Gastrocnemius medialis (tissue), 4 donors: ENCODE measurements at regions of chr12 and their contacts with region 1.

Region 1: DNA sequence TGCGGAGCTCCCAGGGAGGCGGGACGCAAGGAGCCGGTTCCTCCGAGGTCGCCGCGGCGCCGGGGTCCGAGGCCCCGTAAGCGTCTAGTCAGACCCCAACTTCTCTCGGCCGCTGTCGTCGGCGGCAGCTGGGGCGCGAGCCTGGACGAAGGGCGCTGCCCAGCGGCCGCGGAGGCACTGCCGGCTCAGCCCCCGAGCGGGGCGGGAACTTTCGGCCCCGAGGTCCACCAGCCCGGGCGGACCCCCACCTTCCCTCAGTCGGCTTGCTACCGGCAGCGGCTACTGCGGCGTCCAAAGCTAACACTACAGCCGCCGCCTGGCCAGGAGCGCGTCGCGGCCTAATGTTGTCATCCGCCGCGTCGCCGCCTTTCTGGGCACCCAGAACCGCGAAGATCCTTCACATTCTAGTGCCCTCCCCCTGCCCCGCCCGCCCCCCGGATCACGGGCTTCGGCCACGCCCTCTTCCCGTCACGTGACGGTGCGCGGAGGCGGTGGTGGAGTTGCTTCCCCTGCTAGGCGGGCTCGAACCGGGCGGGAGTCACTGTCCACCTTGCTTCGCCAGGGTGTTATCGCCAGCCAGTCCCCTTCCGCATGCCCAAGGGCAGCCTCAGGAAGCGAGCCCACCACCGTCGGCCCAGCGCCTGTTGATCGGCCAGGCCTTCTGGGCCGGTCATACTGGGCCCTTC is at the start of gene OSBPL8:
- DNase-seq: peak; percentile 90 to 95
- ATAC-seq: peak; percentile 90 to 94
- H3K4me3 ChIP-seq: peak within 1 kb of the TSS; percentile 90 to 100 (median 98)
- H3K27ac ChIP-seq: peak within 1 kb of the TSS; percentile 93 to 99 (median 95)
- H3K4me1 ChIP-seq: peaks cover 12 to 35% of the 10 kb centered on the region in 2 donors
- H3K27me3 ChIP-seq: no peaks in the 10 kb centered on the region
- CTCF ChIP-seq: peak; percentile 23 to 48 (median 37)
- POLR2A ChIP-seq: peak; percentile 85 to 94
- total RNA-seq, gene OSBPL8: 25.6 to 46.0 (median 43.4) TPM

Region 2: GRCh38 chr12:75390899-75391538 is 1168.5 kb before region 1 on chr12 and contains the start of gene GLIPR1L2:
- in situ Hi-C with region 1: loop called in 1 of 4 experiments (anchors 25 kb)
- intact Hi-C with region 1: no loop called
- DNase-seq: peak; percentile 90 to 95
- ATAC-seq: peak; percentile 96 to 98
- H3K4me3 ChIP-seq: peak within 1 kb of the TSS; percentile 65 to 84 (median 76)
- H3K27ac ChIP-seq: peak within 1 kb of the TSS; percentile 84 to 93 (median 90)
- H3K4me1 ChIP-seq: peaks cover 23 to 24% of the 10 kb centered on the region in 2 donors
- H3K27me3 ChIP-seq: no peaks in the 10 kb centered on the region
- CTCF ChIP-seq: peak; percentile 73 to 86 (median 79)
- POLR2A ChIP-seq: peak; percentile 68 to 77
- total RNA-seq, gene GLIPR1L2: 0.33 to 1.0 (median 0.49) TPM in 3 of 4 donors, not detected in the other

Region 3: GRCh38 chr12:76374386-76375020 is 185.0 kb before region 1 on chr12:
- in situ Hi-C with region 1: loop called in 2 of 4 experiments (anchors 25 kb)
- intact Hi-C with region 1: no loop called
- DNase-seq: no peak
- ATAC-seq: no peak
- H3K4me3 ChIP-seq: no peak overlapping the region
- H3K27ac ChIP-seq: no peak overlapping the region
- H3K4me1 ChIP-seq: no peaks in the 10 kb centered on the region
- H3K27me3 ChIP-seq: no peaks in the 10 kb centered on the region
- CTCF ChIP-seq: no peak
- POLR2A ChIP-seq: no peak

Region 4: GRCh38 chr12:76384560-76384959 is 175.0 kb before region 1 on chr12:
- in situ Hi-C with region 1: loop called in 1 of 4 experiments (anchors 25 kb)
- intact Hi-C with region 1: loop called (anchors 10 kb)
- DNase-seq: peak in 1 of 2 donors; percentile 22
- ATAC-seq: peak in 1 of 2 donors; percentile 53
- H3K4me3 ChIP-seq: no peak overlapping the region
- H3K27ac ChIP-seq: peak overlapping the region in 2 of 4 donors; percentile 45 to 57
- H3K4me1 ChIP-seq: peaks cover 19% of the 10 kb centered on the region in 2 donors
- H3K27me3 ChIP-seq: no peaks in the 10 kb centered on the region
- CTCF ChIP-seq: no peak
- POLR2A ChIP-seq: no peak

Region 5: DNA sequence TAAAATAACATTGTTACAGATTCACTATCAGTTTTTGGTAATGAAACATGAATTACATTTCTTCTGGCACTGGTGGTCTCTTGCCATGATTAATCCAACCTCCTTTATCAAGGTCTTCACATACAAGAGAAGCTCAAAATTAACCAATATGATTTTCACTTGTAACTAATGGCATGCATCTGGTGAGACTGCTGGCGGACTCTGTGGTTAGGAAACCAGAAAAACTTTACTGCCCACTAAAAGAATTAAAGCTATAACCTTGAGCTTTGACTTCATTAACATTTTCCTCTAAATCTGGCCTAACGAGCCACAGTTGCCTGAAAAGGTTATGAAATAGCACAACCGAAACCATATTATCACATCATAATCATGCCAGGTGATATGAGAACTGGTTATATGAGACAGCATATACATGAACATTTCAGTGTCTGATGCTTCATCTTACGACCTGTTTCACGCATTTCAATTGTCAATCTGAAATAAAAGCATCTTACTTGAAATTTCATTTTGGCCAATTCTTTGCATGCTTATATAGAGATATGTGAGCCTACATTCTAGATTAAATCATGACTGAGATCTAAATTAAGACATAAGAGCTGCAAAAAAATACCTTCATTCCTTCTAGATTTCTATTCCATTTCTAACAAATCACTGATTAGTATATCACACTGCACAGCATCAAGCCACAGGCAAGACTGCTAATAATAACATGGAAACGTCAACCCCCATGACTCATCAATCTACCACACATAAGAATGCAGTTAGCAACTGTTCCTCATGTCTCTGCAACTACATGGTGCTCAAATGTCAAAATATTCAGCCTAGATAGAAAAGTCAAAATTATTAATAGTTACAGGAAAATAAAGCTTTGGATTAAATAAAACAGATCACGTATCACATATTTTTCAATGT is 89.3 kb before region 1 on chr12:
- in situ Hi-C with region 1: no loop called
- intact Hi-C with region 1: loop called (anchors 2 kb)
- DNase-seq: peak; percentile 23 to 59
- ATAC-seq: peak; percentile 100
- H3K4me3 ChIP-seq: peak overlapping the region in 1 of 4 donors; percentile 4
- H3K27ac ChIP-seq: peak overlapping the region; percentile 79 to 87 (median 84)
- H3K4me1 ChIP-seq: peaks cover 31 to 41% of the 10 kb centered on the region in 2 donors
- H3K27me3 ChIP-seq: no peaks in the 10 kb centered on the region
- CTCF ChIP-seq: no peak
- POLR2A ChIP-seq: no peak

Region 6: GRCh38 chr12:76586764-76587395 is 27.3 kb after region 1 on chr12:
- in situ Hi-C with region 1: no loop called
- intact Hi-C with region 1: loop called (anchors 2 kb)
- DNase-seq: peak in 1 of 2 donors; percentile 30
- ATAC-seq: no peak
- H3K4me3 ChIP-seq: no peak overlapping the region
- H3K27ac ChIP-seq: peak overlapping the region; percentile 88 to 97 (median 90)
- H3K4me1 ChIP-seq: peaks cover 15 to 16% of the 10 kb centered on the region in 2 donors
- H3K27me3 ChIP-seq: no peaks in the 10 kb centered on the region
- CTCF ChIP-seq: peak; percentile 55 to 76 (median 64)
- POLR2A ChIP-seq: no peak

Region 7: GRCh38 chr12:76746516-76746915 is 187.0 kb after region 1 on chr12:
- in situ Hi-C with region 1: no loop called
- intact Hi-C with region 1: no loop called
- DNase-seq: no peak
- ATAC-seq: no peak
- H3K4me3 ChIP-seq: no peak overlapping the region
- H3K27ac ChIP-seq: no peak overlapping the region
- H3K4me1 ChIP-seq: no peaks in the 10 kb centered on the region
- H3K27me3 ChIP-seq: no peaks in the 10 kb centered on the region
- CTCF ChIP-seq: no peak
- POLR2A ChIP-seq: no peak